ENCODE measurements at regions of chr16 and their contacts with region 1.

Region 1: DNA sequence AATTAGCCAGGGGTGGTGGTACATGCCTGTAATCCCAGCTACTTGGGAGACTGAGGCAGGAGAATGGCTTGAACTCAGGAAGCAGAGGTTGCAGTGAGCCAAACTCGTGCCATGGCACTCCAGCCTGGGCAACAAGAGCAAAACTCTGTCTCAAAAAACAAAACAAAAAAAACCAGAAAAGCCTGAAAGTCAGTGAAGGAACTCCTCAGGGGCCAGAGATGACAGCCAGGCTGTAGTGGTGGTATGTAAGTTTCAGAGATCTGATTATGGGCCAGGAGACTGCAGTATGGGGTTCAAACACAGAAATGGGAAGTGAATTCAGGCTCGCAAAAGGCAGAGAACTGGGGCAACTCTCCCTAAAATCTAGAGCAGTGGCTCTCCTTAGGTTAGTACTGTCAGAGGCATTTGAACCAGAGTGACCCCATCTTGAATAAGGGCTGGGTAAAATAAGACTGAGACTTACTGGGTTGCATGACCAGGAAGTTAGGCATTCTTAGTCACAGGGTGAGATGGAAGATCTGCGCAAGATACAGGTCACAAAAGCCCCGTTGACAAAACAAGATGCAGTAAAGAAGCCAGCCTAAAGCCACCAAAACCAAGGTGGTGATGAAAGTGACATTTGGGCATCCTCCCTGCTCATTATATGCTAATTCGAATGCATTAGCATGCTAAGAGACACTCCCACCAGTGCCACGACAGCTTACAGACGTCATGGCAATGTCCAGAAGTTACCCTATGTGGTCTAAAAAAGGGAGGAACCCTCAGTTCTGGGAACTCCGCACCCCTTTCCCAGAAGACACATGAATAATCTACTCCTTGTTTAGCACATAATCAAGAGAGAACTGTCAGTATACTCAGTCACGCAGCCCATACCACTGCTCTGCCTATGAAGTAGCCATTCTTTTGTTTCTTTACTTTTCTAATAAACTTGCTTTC is 120.2 kb upstream of the XYLT1 start:
- DNase-seq: no peak
- H3K4me3 ChIP-seq: no peak overlapping the region
- H3K27ac ChIP-seq: no peak overlapping the region
- H3K4me1 ChIP-seq: no peaks in the 10 kb centered on the region
- H3K27me3 ChIP-seq: no peaks in the 10 kb centered on the region
- CTCF ChIP-seq: no peak
- EP300 ChIP-seq: no peak
- POLR2A ChIP-seq: no peak

Region 2: GRCh38 chr16:17224879-17225281 is 366.1 kb before region 1 on chr16:
- intact Hi-C with region 1: no loop called
- DNase-seq: peak; percentile 89
- H3K4me3 ChIP-seq: no peak overlapping the region
- H3K27ac ChIP-seq: peak overlapping the region; percentile 76 to 88 (median 84)
- H3K4me1 ChIP-seq: peaks cover 0 to 50% (median 47%) of the 10 kb centered on the region in 4 donors
- H3K27me3 ChIP-seq: no peaks in the 10 kb centered on the region
- CTCF ChIP-seq: no peak
- EP300 ChIP-seq: peak; percentile 62 to 89 (median 70)
- POLR2A ChIP-seq: no peak

Region 3: GRCh38 chr16:17544785-17545184 is 46.2 kb before region 1 on chr16:
- intact Hi-C with region 1: loop called (anchors 5 kb)
- DNase-seq: no peak
- H3K4me3 ChIP-seq: no peak overlapping the region
- H3K27ac ChIP-seq: no peak overlapping the region
- H3K4me1 ChIP-seq: no peaks in the 10 kb centered on the region
- H3K27me3 ChIP-seq: no peaks in the 10 kb centered on the region
- CTCF ChIP-seq: no peak
- EP300 ChIP-seq: no peak
- POLR2A ChIP-seq: no peak

Region 4: GRCh38 chr16:17617021-17617552 is 26.1 kb after region 1 on chr16:
- intact Hi-C with region 1: loop called (anchors 2 kb)
- DNase-seq: no peak
- H3K4me3 ChIP-seq: no peak overlapping the region
- H3K27ac ChIP-seq: no peak overlapping the region
- H3K4me1 ChIP-seq: peaks cover 0 to 3% (median 0%) of the 10 kb centered on the region in 4 donors
- H3K27me3 ChIP-seq: no peaks in the 10 kb centered on the region
- CTCF ChIP-seq: no peak
- EP300 ChIP-seq: no peak
- POLR2A ChIP-seq: no peak

Region 5: GRCh38 chr16:17633104-17633951 is 42.3 kb after region 1 on chr16:
- intact Hi-C with region 1: no loop called
- DNase-seq: no peak
- H3K4me3 ChIP-seq: no peak overlapping the region
- H3K27ac ChIP-seq: no peak overlapping the region
- H3K4me1 ChIP-seq: no peaks in the 10 kb centered on the region
- H3K27me3 ChIP-seq: peaks cover 0 to 11% (median 0%) of the 10 kb centered on the region in 3 donors
- CTCF ChIP-seq: no peak
- EP300 ChIP-seq: no peak
- POLR2A ChIP-seq: no peak